A673 (cell line): ENCODE measurements at regions of chr3 and their contacts with region 1.

Region 1: GRCh38 chr3:14452679-14453367 is 50.4 kb downstream of the SLC6A6 start:
- DNase-seq: peak; percentile 95
- H3K4me3 ChIP-seq: no peak overlapping the region
- H3K27ac ChIP-seq: peak overlapping the region; percentile 71
- H3K4me1 ChIP-seq: peaks cover 29% of the 10 kb centered on the region
- H3K27me3 ChIP-seq: no peaks in the 10 kb centered on the region
- CTCF ChIP-seq: no peak

Region 2: DNA sequence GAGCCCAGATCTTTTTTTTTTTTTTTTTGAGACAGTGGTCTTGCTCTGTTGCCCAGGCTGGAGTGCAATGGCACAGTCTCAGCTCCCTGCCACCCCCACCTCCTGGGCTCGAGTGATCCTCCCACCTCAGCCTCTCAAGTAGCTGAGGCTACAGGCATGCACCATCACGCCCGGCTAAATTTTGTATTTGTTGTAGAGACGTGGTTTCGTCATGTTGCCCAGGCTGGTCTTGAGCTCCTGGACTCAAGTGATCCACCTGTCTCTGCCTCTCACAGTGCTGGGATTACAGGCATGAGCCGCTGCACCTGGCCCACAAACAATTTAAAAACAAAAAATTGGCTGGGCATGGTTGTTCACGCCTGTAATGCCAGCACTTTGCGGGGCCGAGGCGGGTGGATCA is 73.0 kb before region 1 on chr3:
- CTCF ChIA-PET with region 1: no interaction called
- POLR2A ChIA-PET with region 1: interaction called, 23 read pairs
- intact Hi-C with region 1: no loop called
- DNase-seq: no peak
- H3K4me3 ChIP-seq: no peak overlapping the region
- H3K27ac ChIP-seq: no peak overlapping the region
- H3K4me1 ChIP-seq: no peaks in the 10 kb centered on the region
- H3K27me3 ChIP-seq: no peaks in the 10 kb centered on the region
- CTCF ChIP-seq: no peak

Region 3: GRCh38 chr3:14402304-14402811 is 50.5 kb before region 1 on chr3 and contains the start of gene SLC6A6:
- CTCF ChIA-PET with region 1: no interaction called
- POLR2A ChIA-PET with region 1: no interaction called
- intact Hi-C with region 1: loop called (anchors 5 kb)
- DNase-seq: peak; percentile 96
- H3K4me3 ChIP-seq: peak within 1 kb of the TSS; percentile 91
- H3K27ac ChIP-seq: peak within 1 kb of the TSS; percentile 80
- H3K4me1 ChIP-seq: peaks cover 18% of the 10 kb centered on the region
- H3K27me3 ChIP-seq: no peaks in the 10 kb centered on the region
- CTCF ChIP-seq: peak; percentile 45
- total RNA-seq, gene SLC6A6: 48.8 and 55.1 TPM in 2 replicates

Region 4: DNA sequence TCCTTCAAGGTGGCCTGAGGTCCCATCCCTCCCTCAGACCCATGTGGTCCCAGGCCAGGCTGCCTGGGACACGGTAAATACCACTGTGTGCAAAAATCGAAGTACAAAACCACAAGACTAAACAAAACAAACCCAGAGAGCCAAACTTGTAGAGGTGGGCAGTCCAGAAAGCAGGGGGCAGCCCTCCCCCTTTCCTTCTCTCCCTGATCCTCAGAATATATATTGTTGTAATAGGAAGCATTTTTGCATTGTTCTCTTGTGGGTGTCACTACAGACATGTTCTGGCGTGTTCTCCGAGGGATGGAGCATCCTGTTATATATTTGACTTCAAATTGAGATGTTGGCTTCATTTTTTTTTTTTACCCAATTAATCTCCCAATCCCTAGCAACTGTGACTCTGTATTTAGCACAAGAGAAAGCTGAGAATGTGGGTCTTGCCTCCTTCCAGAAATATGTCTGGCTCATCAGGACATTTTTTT is 35.8 kb after region 1 on chr3:
- CTCF ChIA-PET with region 1: no interaction called
- POLR2A ChIA-PET with region 1: no interaction called
- intact Hi-C with region 1: no loop called
- DNase-seq: no peak
- H3K4me3 ChIP-seq: no peak overlapping the region
- H3K27ac ChIP-seq: no peak overlapping the region
- H3K4me1 ChIP-seq: no peaks in the 10 kb centered on the region
- H3K27me3 ChIP-seq: no peaks in the 10 kb centered on the region
- CTCF ChIP-seq: no peak